WTC11 (cell line): ENCODE measurements at regions of chr1 and their contacts with region 1.

Region 1: DNA sequence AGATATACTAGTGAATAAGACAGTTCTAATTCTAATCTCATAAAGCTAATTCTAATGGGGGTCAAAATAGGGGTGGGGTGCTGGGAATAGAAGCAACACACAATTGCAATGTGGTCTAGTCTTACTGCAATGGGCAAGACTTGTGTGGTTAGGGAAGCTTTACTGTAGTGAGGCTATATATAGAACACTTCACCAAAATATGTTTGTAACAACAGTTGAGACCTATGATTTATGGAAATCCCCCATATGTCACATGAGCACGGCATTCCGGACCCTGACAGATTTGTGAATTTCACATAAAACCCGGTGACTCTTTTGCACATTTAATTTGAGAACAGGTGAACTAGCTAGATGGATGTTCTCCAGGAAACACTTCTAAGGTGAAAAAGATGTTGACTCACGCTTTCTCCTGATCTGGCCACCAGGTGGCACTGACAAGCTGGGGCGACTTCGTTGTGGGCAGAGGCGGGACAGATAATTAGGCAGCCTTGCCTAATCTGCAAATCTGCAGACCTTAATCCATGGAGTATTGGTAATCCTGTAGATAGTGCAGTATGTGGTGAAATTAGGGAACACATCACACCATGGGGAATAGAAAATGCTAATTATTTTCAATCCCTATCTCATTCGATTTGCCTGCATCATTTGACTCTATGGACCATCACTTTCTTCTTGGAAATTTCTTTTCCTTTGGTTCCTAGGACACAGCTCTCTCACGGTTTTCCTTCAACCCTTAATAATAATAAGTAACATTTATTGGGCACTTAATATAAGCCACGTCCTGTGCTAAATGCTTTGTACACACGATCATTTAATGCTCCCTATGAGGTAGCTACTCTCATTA is 37.7 kb downstream of the KIAA0040 start:
- DNase-seq: peak; percentile 77
- ATAC-seq: peak; percentile 28
- H3K4me3 Mint-ChIP-seq: no peak overlapping the region
- H3K27ac Mint-ChIP-seq: no peak overlapping the region
- H3K4me1 Mint-ChIP-seq: peaks cover 19% of the 10 kb centered on the region
- H3K27me3 Mint-ChIP-seq: peaks cover 19% of the 10 kb centered on the region
- CTCF ChIP-seq: peak; percentile 82

Region 2: DNA sequence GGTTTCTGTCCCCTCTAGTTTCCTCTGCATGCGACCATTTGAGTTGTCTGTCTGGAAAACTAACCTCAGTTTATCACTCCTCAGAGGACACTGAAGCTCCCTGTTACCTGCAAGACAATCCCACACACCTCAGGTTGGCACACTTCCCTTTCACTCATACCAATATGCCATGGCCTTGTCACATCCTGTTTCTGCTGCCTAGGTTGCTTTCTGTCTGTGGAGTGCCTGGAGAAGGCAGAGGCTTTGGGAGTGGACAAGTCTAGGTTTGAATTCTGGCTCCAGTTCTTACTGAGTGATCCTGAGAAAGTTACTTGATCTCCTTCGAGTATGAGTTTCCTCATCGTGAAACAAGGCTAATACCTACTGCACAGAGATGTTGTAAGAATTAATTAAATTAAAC is 326.6 kb before region 1 on chr1:
- CTCF ChIA-PET with region 1: no interaction called
- POLR2A ChIA-PET with region 1: no interaction called
- DNase-seq: no peak
- ATAC-seq: no peak
- H3K4me3 Mint-ChIP-seq: no peak overlapping the region
- H3K27ac Mint-ChIP-seq: peak overlapping the region; percentile 83; the same call in 1 of the 2 replicates
- H3K4me1 Mint-ChIP-seq: no peaks in the 10 kb centered on the region
- H3K27me3 Mint-ChIP-seq: no peaks in the 10 kb centered on the region
- CTCF ChIP-seq: no peak

Region 3: DNA sequence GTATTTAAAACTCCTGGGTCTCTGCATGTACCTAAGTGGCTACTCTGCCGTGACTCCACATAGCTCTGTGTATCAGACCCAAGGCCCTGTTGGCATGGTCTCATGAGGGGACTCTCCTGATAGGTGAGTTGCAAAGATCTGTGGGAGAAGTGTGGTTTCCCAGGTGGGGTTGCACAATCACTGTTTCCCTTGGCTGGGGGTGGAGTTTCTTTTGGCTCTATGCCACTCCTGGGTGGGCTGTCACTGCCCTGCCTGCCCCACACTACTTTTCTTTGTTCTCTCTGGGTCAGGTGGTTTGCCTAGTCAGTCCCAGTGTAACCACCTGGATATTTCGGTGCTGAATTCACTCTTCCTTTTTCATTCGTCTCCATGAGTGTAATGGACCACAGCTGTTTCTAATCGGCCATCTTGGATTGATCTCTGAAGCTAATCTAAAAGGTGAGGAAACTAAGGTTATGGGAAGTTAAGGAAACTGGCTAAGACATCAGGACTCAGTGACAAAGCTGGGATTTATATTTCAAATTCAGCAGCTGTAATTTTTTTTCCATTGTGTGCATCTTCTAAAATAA is 252.2 kb before region 1 on chr1:
- CTCF ChIA-PET with region 1: no interaction called
- POLR2A ChIA-PET with region 1: no interaction called
- DNase-seq: no peak
- ATAC-seq: no peak
- H3K4me3 Mint-ChIP-seq: no peak overlapping the region
- H3K27ac Mint-ChIP-seq: peak overlapping the region; percentile 89
- H3K4me1 Mint-ChIP-seq: peaks cover 45% of the 10 kb centered on the region
- H3K27me3 Mint-ChIP-seq: no peaks in the 10 kb centered on the region
- CTCF ChIP-seq: no peak

Region 4: GRCh38 chr1:175062339-175062738 is 92.5 kb before region 1 on chr1:
- CTCF ChIA-PET with region 1: no interaction called
- POLR2A ChIA-PET with region 1: no interaction called
- DNase-seq: no peak
- ATAC-seq: no peak
- H3K4me3 Mint-ChIP-seq: no peak overlapping the region
- H3K27ac Mint-ChIP-seq: no peak overlapping the region
- H3K4me1 Mint-ChIP-seq: peaks cover 2% of the 10 kb centered on the region; the same call in 1 of the 2 replicates
- H3K27me3 Mint-ChIP-seq: no peaks in the 10 kb centered on the region
- CTCF ChIP-seq: no peak

Region 5: DNA sequence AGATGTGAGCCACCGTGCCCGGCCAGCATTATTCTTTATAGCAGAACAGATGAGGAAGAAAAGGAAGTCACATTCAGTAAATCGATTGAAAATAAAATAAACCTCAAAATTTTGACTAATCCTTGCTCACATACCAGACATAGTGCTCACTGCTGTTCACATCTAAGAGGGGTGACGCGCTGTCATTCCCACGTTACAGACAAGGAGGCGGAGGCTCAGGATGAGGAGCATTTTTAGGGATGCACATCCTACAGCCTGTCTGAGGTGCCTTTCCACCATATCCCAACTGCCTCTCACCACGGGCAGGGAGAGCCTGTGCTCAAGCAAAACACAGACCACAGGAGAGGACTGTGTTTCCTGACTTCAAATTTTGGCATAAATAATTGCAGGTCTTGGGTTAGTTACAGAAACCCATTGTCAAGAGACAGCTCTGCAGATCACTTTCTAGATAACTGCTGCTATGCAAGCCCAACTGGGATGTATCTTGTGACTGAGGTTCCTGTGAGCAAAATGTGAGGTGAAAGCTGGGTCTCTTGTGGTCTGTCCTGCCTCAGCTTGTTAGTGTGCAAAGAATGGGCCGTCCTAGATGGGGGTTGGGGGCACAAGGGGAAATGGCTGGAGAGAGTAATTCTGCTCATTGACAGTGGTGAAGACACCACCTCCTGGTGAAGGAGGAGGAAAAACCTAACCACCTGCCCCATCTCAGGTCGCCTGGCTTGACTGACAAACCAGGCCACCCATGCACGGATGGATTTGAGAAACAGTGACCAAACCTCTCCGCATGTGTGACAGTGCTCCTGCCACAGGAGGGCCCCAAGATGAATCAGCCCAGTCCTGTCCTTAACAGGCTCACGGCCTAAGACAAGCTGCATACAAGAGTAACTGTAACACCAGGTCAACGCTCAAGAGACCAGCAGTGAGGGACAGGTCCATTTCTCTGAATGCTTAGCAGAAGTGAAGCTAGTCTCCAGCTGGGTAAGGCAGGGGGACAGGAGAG is 79.0 kb before region 1 on chr1:
- CTCF ChIA-PET with region 1: interaction called, 11 read pairs
- POLR2A ChIA-PET with region 1: no interaction called
- DNase-seq: no peak
- ATAC-seq: peak; percentile 5; the same call in 1 of the 2 replicates
- H3K4me3 Mint-ChIP-seq: no peak overlapping the region
- H3K27ac Mint-ChIP-seq: no peak overlapping the region
- H3K4me1 Mint-ChIP-seq: peaks cover 35% of the 10 kb centered on the region
- H3K27me3 Mint-ChIP-seq: peaks cover 13% of the 10 kb centered on the region
- CTCF ChIP-seq: no peak

Region 6: GRCh38 chr1:175174309-175175165 is 19.7 kb after region 1 on chr1:
- CTCF ChIA-PET with region 1: interaction called, 14 read pairs
- POLR2A ChIA-PET with region 1: no interaction called
- DNase-seq: no peak
- ATAC-seq: no peak
- H3K4me3 Mint-ChIP-seq: no peak overlapping the region
- H3K27ac Mint-ChIP-seq: no peak overlapping the region
- H3K4me1 Mint-ChIP-seq: peaks cover 7% of the 10 kb centered on the region; the same call in 1 of the 2 replicates
- H3K27me3 Mint-ChIP-seq: no peaks in the 10 kb centered on the region
- CTCF ChIP-seq: no peak

Region 7: GRCh38 chr1:175200678-175201521 is 46.0 kb after region 1 on chr1:
- CTCF ChIA-PET with region 1: interaction called, 17 read pairs
- POLR2A ChIA-PET with region 1: no interaction called
- DNase-seq: no peak
- ATAC-seq: no peak
- H3K4me3 Mint-ChIP-seq: no peak overlapping the region
- H3K27ac Mint-ChIP-seq: no peak overlapping the region
- H3K4me1 Mint-ChIP-seq: no peaks in the 10 kb centered on the region
- H3K27me3 Mint-ChIP-seq: peaks cover 3% of the 10 kb centered on the region
- CTCF ChIP-seq: no peak

Region 8: GRCh38 chr1:175307160-175307559 is 152.3 kb after region 1 on chr1:
- CTCF ChIA-PET with region 1: interaction called, 11 read pairs
- POLR2A ChIA-PET with region 1: no interaction called
- DNase-seq: no peak
- ATAC-seq: no peak
- H3K4me3 Mint-ChIP-seq: no peak overlapping the region
- H3K27ac Mint-ChIP-seq: no peak overlapping the region
- H3K4me1 Mint-ChIP-seq: peaks cover 8% of the 10 kb centered on the region
- H3K27me3 Mint-ChIP-seq: peaks cover 2% of the 10 kb centered on the region; the same call in 1 of the 2 replicates
- CTCF ChIP-seq: no peak

Region 9: GRCh38 chr1:175353066-175353465 is 198.2 kb after region 1 on chr1:
- CTCF ChIA-PET with region 1: interaction called, 11 read pairs
- POLR2A ChIA-PET with region 1: no interaction called
- DNase-seq: no peak
- ATAC-seq: no peak
- H3K4me3 Mint-ChIP-seq: no peak overlapping the region
- H3K27ac Mint-ChIP-seq: no peak overlapping the region
- H3K4me1 Mint-ChIP-seq: peaks cover 6% of the 10 kb centered on the region; the same call in 1 of the 2 replicates
- H3K27me3 Mint-ChIP-seq: no peaks in the 10 kb centered on the region; the same call in 1 of the 2 replicates
- CTCF ChIP-seq: no peak

Region 10: GRCh38 chr1:175960169-175960568 is 805.3 kb after region 1 on chr1:
- CTCF ChIA-PET with region 1: no interaction called
- POLR2A ChIA-PET with region 1: no interaction called
- DNase-seq: no peak
- ATAC-seq: no peak
- H3K4me3 Mint-ChIP-seq: no peak overlapping the region
- H3K27ac Mint-ChIP-seq: no peak overlapping the region
- H3K4me1 Mint-ChIP-seq: peaks cover 19% of the 10 kb centered on the region
- H3K27me3 Mint-ChIP-seq: no peaks in the 10 kb centered on the region
- CTCF ChIP-seq: no peak